GM12878 (cell line): ENCODE measurements at regions of chr11 and their contacts with region 1.

Region 1: GRCh38 chr11:27783701-27784355 is 83.6 kb upstream of the BDNF start:
- DNase-seq: no peak
- ATAC-seq: no peak
- H3K4me3 ChIP-seq: no peak overlapping the region
- H3K27ac ChIP-seq: no peak overlapping the region
- H3K4me1 ChIP-seq: no peaks in the 10 kb centered on the region
- H3K27me3 ChIP-seq: no peaks in the 10 kb centered on the region
- CTCF ChIP-seq: no peak
- EP300 ChIP-seq: no peak
- POLR2A ChIP-seq: no peak
- RAD21 ChIP-seq: no peak

Region 2: GRCh38 chr11:27830206-27830605 is 46.4 kb after region 1 on chr11:
- CTCF ChIA-PET with region 1: no interaction called
- POLR2A ChIA-PET with region 1: no interaction called
- RAD21 ChIA-PET with region 1: no interaction called
- SMC1A ChIA-PET with region 1: no interaction called
- in situ Hi-C with region 1: no loop called
- intact Hi-C with region 1: loop called (anchors 5 kb)
- DNase-seq: no peak
- ATAC-seq: no peak
- H3K4me3 ChIP-seq: no peak overlapping the region
- H3K27ac ChIP-seq: no peak overlapping the region
- H3K4me1 ChIP-seq: no peaks in the 10 kb centered on the region
- H3K27me3 ChIP-seq: no peaks in the 10 kb centered on the region
- CTCF ChIP-seq: no peak
- EP300 ChIP-seq: no peak
- POLR2A ChIP-seq: no peak
- RAD21 ChIP-seq: no peak

Region 3: DNA sequence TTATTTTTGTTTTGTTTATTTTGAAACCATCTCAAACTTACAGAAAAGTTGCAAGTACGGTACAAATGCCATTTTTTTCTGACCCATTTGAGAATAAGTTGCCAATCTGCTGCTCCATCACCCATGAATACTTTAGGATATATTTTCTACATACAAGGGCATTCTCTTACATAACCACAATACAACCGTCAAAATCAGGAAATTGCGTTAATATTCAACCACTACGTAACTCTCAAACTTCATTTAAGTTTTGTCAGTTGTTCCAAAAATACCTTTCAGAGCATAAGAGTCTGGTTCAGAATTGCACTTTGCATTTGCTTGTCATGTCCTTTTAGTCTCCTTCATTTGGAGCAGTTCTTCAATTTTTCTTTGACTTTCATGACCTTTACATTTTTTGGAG is 110.7 kb after region 1 on chr11:
- CTCF ChIA-PET with region 1: no interaction called
- POLR2A ChIA-PET with region 1: no interaction called
- RAD21 ChIA-PET with region 1: no interaction called
- SMC1A ChIA-PET with region 1: no interaction called
- in situ Hi-C with region 1: no loop called
- intact Hi-C with region 1: no loop called
- DNase-seq: no peak
- ATAC-seq: peak; percentile 81
- H3K4me3 ChIP-seq: no peak overlapping the region
- H3K27ac ChIP-seq: no peak overlapping the region
- H3K4me1 ChIP-seq: no peaks in the 10 kb centered on the region
- H3K27me3 ChIP-seq: no peaks in the 10 kb centered on the region
- CTCF ChIP-seq: no peak
- EP300 ChIP-seq: no peak
- POLR2A ChIP-seq: no peak
- RAD21 ChIP-seq: no peak